Activated naive CD4-positive, alpha-beta T cell treated with anti-CD3 and anti-CD28 coated beads for 36 hours (primary cell): ENCODE measurements at regions of chr19 and their contacts with region 1.

Region 1: DNA sequence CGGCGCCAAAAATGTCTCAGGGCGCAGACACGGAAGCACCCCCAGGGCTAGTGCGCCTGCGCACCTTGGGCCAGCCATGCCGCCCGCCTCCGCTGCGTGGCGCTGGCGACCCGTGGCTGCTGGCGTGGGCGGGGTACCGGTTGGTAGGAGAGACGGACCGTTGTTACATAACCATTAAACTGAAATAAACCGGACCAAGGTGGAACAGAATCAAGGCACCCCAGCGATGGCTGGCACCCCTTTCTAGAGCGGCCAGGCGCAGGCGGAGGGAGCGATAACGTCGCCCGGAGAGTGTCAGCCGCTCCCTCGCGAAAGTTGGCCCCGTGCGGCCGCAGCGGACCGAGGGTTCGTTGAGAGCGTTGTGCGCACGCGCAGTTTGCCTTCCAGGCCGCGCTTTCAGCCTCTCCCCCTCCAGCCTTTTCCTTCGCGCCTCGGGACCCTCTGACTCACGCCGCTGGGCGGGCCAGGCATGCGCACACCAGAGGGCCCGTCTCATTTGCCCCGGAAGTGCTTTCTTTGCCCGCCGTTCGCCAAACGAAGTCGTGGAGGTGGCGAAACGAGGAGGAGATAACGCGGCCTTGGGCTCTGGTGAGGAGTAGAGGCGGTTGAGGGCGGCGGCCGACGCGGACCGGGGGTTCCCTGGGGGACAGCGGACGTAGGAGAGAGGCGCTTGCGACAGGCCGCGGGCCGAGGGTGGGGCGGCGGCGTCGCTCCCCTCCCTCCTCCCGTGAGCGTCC is at the starts of genes PLEKHJ1 and SF3A2:
- DNase-seq: peak; percentile 98
- H3K4me3 Mint-ChIP-seq: peak within 1 kb of the TSS; percentile 99
- H3K27ac Mint-ChIP-seq: peak within 1 kb of the TSS; percentile 98
- H3K4me1 Mint-ChIP-seq: peaks cover 64% of the 10 kb centered on the region
- H3K27me3 Mint-ChIP-seq: no peaks in the 10 kb centered on the region
- total RNA-seq, gene PLEKHJ1: 56.9 to 60.6 TPM
- total RNA-seq, gene SF3A2: 154 to 158 TPM

Region 2: GRCh38 chr19:2016041-2016807 is 220.3 kb before region 1 on chr19:
- CTCF ChIA-PET with region 1: no interaction called
- intact Hi-C with region 1: loop called (anchors 10 kb)
- DNase-seq: peak; percentile 77
- H3K4me3 Mint-ChIP-seq: peak overlapping the region; percentile 59
- H3K27ac Mint-ChIP-seq: peak overlapping the region; percentile 47
- H3K4me1 Mint-ChIP-seq: peaks cover 17% of the 10 kb centered on the region
- H3K27me3 Mint-ChIP-seq: no peaks in the 10 kb centered on the region

Region 3: DNA sequence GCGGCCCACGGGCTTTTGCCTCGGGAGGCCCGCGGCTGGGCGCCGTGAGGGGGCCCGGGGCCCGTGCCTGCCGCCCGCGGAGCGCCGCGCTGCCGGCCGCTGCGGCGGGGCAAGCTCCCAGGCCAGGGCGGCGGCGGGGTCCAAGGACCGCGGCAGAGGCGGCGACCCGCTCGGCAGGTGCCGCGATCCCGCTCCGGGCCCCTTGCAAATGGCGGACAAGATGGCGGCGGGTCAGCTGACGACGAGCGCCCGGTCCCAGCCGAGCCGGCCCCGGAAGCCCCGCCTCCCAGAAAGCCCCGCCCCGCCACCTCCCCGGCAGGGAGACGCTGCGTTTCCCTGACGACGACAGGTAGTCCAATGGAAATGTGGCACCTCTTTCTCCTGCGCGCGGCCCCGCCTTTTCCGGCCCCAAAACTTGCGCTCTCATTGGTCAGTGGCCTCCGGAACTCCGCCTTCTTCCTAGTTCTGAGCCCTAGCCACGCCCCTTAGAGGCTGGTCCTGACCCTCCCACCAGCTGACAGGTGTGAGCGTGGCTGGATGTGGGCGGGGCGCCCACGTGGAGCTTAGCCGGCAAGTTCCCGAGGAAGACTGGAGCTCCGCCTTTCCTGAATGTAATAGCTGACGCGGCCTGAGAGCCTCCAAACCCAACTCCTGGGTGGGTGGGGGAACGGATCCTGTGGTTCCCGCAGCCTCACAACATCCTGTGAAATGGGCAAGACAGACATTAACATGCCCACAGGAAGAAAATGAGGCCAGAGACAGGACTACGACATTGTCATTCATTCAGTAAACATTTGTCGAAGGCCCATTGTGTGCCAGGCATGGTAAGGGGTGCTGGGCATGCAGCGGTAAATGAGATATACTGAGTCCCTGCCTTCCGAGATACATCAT is 84.9 kb before region 1 on chr19 and contains the start of gene AP3D1:
- CTCF ChIA-PET with region 1: interaction called, 5 read pairs
- intact Hi-C with region 1: loop called (anchors 1 kb)
- DNase-seq: peak; percentile 100
- H3K4me3 Mint-ChIP-seq: peak within 1 kb of the TSS; percentile 83
- H3K27ac Mint-ChIP-seq: peak within 1 kb of the TSS; percentile 74
- H3K4me1 Mint-ChIP-seq: peaks cover 39% of the 10 kb centered on the region
- H3K27me3 Mint-ChIP-seq: no peaks in the 10 kb centered on the region
- total RNA-seq, gene AP3D1: 60.5 to 64.2 TPM

Region 4: GRCh38 chr19:2269244-2269947 is 32.9 kb after region 1 on chr19:
- CTCF ChIA-PET with region 1: interaction called, 6 read pairs
- intact Hi-C with region 1: loop called (anchors 1 kb)
- DNase-seq: peak; percentile 99
- H3K4me3 Mint-ChIP-seq: peak overlapping the region; percentile 89
- H3K27ac Mint-ChIP-seq: peak overlapping the region; percentile 92
- H3K4me1 Mint-ChIP-seq: peaks cover 43% of the 10 kb centered on the region
- H3K27me3 Mint-ChIP-seq: no peaks in the 10 kb centered on the region

Region 5: GRCh38 chr19:2427429-2428320 is 191.2 kb after region 1 on chr19 and contains the start of gene TIMM13:
- CTCF ChIA-PET with region 1: no interaction called
- intact Hi-C with region 1: loop called (anchors 1 kb)
- DNase-seq: peak; percentile 96
- H3K4me3 Mint-ChIP-seq: peak within 1 kb of the TSS; percentile 93
- H3K27ac Mint-ChIP-seq: peak within 1 kb of the TSS; percentile 96
- H3K4me1 Mint-ChIP-seq: peaks cover 13% of the 10 kb centered on the region
- H3K27me3 Mint-ChIP-seq: no peaks in the 10 kb centered on the region
- total RNA-seq, gene TIMM13: 67.3 to 70.8 TPM